ACHN (cell line): ENCODE measurements at regions of chr2 and their contacts with region 1.

Region 1: GRCh38 chr2:152025678-152026287 is 73.1 kb downstream of the CACNB4 start:
- DNase-seq: peak; percentile 77

Region 2: DNA sequence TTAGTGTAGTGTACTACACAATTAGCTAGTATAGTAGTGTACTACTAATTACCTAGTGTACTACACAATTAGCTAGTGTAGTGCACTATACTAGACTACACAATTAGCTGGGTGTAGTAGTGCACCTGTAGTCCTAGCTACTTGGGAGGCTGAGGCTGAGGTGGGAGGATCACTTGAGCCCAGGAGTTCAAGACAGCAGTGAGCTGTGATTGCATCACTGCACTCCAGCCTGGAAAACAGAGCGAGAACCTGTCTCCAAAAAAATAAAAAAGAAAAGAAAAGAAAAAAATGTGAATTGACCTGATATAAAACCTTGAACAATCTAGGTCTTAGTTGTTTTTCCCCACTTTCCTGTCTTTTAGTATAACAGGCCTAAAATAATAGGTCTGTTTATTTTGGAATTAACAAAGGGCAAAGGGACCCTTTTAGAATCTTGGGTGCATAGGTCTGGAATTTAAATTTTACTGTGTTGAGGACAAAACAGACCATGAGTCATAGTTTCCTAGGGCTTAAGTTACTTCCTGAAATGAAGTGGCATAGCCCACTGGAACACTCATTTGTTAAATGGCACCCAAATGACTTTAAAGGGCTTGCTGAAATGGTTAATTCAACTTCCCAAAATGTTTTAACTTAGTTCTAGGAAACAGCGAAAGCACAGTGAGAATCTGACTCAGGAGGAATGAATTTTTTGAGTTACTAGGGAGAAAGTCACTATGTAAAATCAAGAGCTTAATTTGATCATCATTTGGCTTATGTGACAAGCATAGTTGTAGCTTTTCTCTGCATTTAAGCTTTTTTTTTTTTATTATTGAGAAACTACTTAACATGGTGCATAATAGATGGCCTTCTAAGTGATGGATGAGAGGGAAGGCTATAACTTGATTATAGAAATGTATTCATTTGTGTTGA is 146.9 kb before region 1 on chr2:
- in situ Hi-C with region 1: no loop called
- DNase-seq: peak; percentile 38

Region 3: DNA sequence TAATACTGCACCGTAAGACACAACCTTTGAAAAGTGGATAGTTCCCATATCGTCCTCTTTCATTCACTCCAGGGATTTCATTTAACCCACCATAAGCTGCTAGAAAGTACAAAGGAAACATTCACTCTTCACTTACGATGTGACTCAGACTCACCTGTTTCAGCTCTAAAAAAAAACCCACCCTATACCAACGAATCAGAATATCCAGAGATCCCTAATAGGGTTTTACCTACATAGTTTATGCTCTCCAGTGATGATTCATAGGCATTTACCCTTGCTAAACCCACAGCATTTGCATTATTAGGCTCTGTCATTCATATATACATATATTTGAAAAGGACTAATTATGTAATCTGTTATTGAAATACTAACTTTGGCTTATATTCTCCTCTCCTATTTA is 631.3 kb after region 1 on chr2:
- in situ Hi-C with region 1: loop called (anchors 25 kb)
- DNase-seq: no peak